T-cell (primary cell): ENCODE measurements at regions of chr11 and their contacts with region 1.

Region 1: DNA sequence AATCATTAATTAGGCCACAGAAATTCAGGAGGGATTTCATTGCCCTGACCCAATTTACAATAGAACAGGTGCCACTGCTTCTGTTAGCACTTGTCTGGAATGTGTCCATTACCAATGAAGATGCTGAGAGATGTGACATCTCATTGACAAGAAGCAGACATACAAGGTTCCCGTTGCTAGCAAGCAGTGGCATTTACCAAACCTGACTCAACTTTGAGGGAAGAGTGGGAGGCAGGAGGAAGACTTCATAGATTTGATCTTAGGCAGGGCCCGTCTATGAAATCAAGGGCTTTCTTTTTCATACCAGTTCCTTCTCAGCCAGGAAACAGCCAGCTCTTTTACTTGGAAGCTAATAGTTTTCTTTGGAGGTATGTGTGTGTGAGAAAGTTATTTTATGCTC is 280.2 kb downstream of the NELL1 start:
- DNase-seq: no peak
- ATAC-seq: no peak
- H3K4me3 ChIP-seq: no peak overlapping the region
- H3K4me3 Mint-ChIP-seq: no peak overlapping the region
- H3K27ac ChIP-seq: no peak overlapping the region
- H3K27ac Mint-ChIP-seq: no peak overlapping the region
- H3K4me1 ChIP-seq: no peaks in the 10 kb centered on the region
- H3K4me1 Mint-ChIP-seq: no peaks in the 10 kb centered on the region
- H3K27me3 ChIP-seq: no peaks in the 10 kb centered on the region
- H3K27me3 Mint-ChIP-seq: no peaks in the 10 kb centered on the region

Region 2: GRCh38 chr11:20937826-20938225 is 11.8 kb before region 1 on chr11:
- CTCF ChIA-PET with region 1: no interaction called
- POLR2A ChIA-PET with region 1: interaction called in 1 of 2 experiments, 14 read pairs
- DNase-seq: no peak
- ATAC-seq: no peak
- H3K4me3 ChIP-seq: no peak overlapping the region
- H3K4me3 Mint-ChIP-seq: no peak overlapping the region
- H3K27ac ChIP-seq: no peak overlapping the region
- H3K27ac Mint-ChIP-seq: no peak overlapping the region
- H3K4me1 ChIP-seq: no peaks in the 10 kb centered on the region
- H3K4me1 Mint-ChIP-seq: no peaks in the 10 kb centered on the region
- H3K27me3 ChIP-seq: no peaks in the 10 kb centered on the region
- H3K27me3 Mint-ChIP-seq: no peaks in the 10 kb centered on the region

Region 3: GRCh38 chr11:20973940-20974559 is 24.5 kb after region 1 on chr11:
- CTCF ChIA-PET with region 1: no interaction called
- POLR2A ChIA-PET with region 1: interaction called in 1 of 2 experiments, 11 read pairs
- DNase-seq: no peak
- ATAC-seq: no peak
- H3K4me3 ChIP-seq: no peak overlapping the region
- H3K4me3 Mint-ChIP-seq: no peak overlapping the region
- H3K27ac ChIP-seq: no peak overlapping the region
- H3K27ac Mint-ChIP-seq: no peak overlapping the region
- H3K4me1 ChIP-seq: no peaks in the 10 kb centered on the region
- H3K4me1 Mint-ChIP-seq: no peaks in the 10 kb centered on the region
- H3K27me3 ChIP-seq: no peaks in the 10 kb centered on the region
- H3K27me3 Mint-ChIP-seq: no peaks in the 10 kb centered on the region